ENCODE measurements at regions of chr6 and their contacts with region 1.

Region 1: DNA sequence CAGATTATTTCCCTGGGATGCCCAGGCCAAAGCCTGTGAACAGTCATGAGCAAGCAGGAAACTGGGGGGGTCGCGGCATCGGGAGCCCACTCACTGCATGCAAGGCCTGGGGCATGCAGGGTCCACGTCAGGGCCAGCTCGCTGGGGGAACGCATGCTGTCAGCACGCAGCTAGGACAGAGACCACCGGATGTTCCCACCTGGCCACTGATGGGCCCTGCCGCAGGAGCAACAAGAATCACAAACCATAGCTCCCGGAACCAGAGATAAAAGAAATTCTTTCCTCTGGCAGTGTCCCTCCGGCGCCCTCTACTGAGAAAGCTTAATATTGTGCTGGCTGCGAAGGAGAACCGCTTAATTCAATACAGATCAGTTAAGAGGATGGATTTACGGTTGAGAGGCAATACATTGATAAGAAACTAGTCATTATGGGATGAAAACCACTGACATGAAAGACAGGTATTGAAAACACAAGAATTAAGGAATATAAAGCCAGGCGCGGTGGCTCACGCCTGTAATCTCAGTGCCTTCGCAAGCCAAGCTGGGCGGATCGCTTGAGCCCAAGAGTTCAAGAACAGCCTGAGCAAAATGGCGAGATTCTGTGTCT is 32.6 kb downstream of the C6orf15 start:
- DNase-seq: peak; percentile 73
- H3K4me3 ChIP-seq: peak overlapping the region in 1 of 3 experiments; percentile 40
- H3K27ac ChIP-seq: no peak overlapping the region
- H3K4me1 ChIP-seq: peaks cover 4% of the 10 kb centered on the region
- H3K27me3 ChIP-seq: peaks cover 2 to 3% of the 10 kb centered on the region in 2 experiments
- CTCF ChIP-seq: peak; percentile 68 to 80
- POLR2A ChIP-seq: no peak

Region 2: GRCh38 chr6:30883685-30884520 is 195.9 kb before region 1 on chr6 and contains the start of gene DDR1:
- CTCF ChIA-PET with region 1: interaction called, 13 read pairs
- POLR2A ChIA-PET with region 1: no interaction called
- dilution Hi-C with region 1: no loop called
- intact Hi-C with region 1: no loop called
- DNase-seq: no peak
- H3K4me3 ChIP-seq: peak within 1 kb of the TSS; percentile 22 to 76 (median 47)
- H3K27ac ChIP-seq: no peak within 1 kb of the TSS
- H3K4me1 ChIP-seq: no peaks in the 10 kb centered on the region
- H3K27me3 ChIP-seq: peaks cover 0 to 2% of the 10 kb centered on the region in 2 experiments
- CTCF ChIP-seq: no peak
- POLR2A ChIP-seq: no peak
- total RNA-seq, gene DDR1: 17.7 and 22.9 TPM in 2 replicates

Region 3: GRCh38 chr6:30942338-30943060 is 137.3 kb before region 1 on chr6:
- CTCF ChIA-PET with region 1: interaction called, 19 read pairs
- POLR2A ChIA-PET with region 1: no interaction called
- dilution Hi-C with region 1: no loop called
- intact Hi-C with region 1: no loop called
- DNase-seq: peak; percentile 56
- H3K4me3 ChIP-seq: no peak overlapping the region
- H3K27ac ChIP-seq: no peak overlapping the region
- H3K4me1 ChIP-seq: no peaks in the 10 kb centered on the region
- H3K27me3 ChIP-seq: peaks cover 6 to 16% of the 10 kb centered on the region in 2 experiments
- CTCF ChIP-seq: peak; percentile 55
- POLR2A ChIP-seq: no peak

Region 4: DNA sequence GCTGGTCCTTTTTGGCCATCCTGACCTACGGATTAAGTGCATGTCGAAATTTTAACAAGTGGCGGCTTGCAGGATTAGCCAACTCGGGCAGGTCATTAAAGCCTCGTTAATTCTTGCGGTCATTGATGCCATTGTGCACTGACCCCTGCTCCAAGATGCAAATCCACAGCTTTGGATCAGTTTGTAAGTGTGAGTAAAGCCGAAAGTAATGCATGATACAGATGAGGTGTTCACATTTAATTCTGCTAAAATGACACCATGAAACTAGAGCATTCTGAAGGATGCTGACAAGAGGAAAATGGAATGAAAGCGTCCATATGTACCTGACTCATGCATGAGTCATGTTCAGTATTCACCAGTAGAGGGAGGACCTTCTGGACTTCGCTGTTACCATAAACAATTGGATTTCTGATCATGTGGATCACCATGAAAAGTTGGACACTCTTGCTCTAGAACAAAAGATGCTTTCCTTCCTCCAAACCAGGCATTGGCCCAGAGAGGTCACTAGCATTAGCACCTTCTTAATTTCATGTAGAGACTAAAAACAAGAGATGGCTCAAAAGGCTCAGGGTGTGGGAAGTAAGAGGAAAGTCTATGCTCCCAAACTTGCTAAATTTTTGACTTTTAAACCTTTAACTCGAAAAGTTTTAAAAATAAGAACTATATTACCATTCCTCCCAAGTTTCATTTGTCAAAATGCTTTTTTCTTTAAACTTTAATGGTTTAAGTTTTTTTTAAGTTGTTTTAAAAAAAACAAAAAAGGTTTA is 21.4 kb before region 1 on chr6:
- CTCF ChIA-PET with region 1: interaction called, 22 read pairs
- POLR2A ChIA-PET with region 1: no interaction called
- dilution Hi-C with region 1: no loop called
- intact Hi-C with region 1: no loop called
- DNase-seq: peak; percentile 80
- H3K4me3 ChIP-seq: no peak overlapping the region
- H3K27ac ChIP-seq: no peak overlapping the region
- H3K4me1 ChIP-seq: no peaks in the 10 kb centered on the region
- H3K27me3 ChIP-seq: peaks cover 7 to 10% of the 10 kb centered on the region in 2 experiments
- CTCF ChIP-seq: peak; percentile 36 to 60
- POLR2A ChIP-seq: no peak

Region 5: DNA sequence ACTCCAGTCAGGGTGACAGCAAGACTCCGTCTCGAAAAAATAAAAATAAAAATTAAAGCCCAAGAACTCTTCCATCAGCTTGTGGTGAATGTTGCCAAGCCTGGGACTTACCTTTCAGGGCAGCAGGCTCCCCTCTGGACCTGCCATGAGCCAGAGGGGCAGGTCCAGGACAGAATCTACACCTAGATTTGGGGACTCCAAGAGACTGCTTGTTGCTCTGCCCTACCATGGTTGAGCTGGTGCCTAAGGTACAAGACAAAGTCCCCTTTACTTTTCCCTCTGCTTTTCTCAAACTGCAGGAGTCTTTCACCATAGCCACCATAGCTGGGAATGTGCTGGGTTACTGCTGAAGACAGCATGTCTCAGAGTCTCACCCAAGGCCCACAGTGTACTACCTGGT is 23.4 kb after region 1 on chr6:
- CTCF ChIA-PET with region 1: interaction called, 12 read pairs
- POLR2A ChIA-PET with region 1: no interaction called
- dilution Hi-C with region 1: no loop called
- intact Hi-C with region 1: no loop called
- DNase-seq: no peak
- H3K4me3 ChIP-seq: no peak overlapping the region
- H3K27ac ChIP-seq: no peak overlapping the region
- H3K4me1 ChIP-seq: no peaks in the 10 kb centered on the region
- H3K27me3 ChIP-seq: peaks cover 0 to 3% of the 10 kb centered on the region in 2 experiments
- CTCF ChIP-seq: no peak
- POLR2A ChIP-seq: no peak

Region 6: GRCh38 chr6:31197559-31198305 is 118.0 kb after region 1 on chr6:
- CTCF ChIA-PET with region 1: interaction called, 10 read pairs
- POLR2A ChIA-PET with region 1: no interaction called
- dilution Hi-C with region 1: no loop called
- intact Hi-C with region 1: no loop called
- DNase-seq: peak; percentile 74
- H3K4me3 ChIP-seq: peak overlapping the region; percentile 51 to 88 (median 79)
- H3K27ac ChIP-seq: peak overlapping the region; percentile 93
- H3K4me1 ChIP-seq: peaks cover 4% of the 10 kb centered on the region
- H3K27me3 ChIP-seq: no peaks in the 10 kb centered on the region
- CTCF ChIP-seq: no peak
- POLR2A ChIP-seq: peak; percentile 27

Region 7: DNA sequence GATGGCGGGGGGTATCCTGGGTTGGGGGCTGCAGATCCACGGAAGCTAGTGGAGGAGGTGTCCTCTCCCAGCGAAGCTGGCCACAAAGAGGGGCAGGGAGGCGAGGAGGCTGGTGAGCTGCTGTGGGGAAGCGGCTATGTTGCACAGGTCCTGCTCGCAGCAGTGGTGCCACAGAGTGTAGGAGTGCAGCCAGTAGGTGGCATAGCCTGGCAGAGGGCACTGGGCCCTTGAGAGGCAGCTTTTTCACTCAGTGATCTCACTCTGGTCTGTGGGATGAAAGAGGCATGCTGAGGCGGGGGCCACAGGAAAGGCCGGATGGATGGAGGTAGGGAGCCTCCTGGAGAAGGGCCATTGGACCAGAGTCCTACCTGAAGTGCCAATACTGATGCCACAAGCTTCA is 632.5 kb after region 1 on chr6:
- CTCF ChIA-PET with region 1: no interaction called
- POLR2A ChIA-PET with region 1: no interaction called
- dilution Hi-C with region 1: no loop called
- intact Hi-C with region 1: no loop called
- DNase-seq: no peak
- H3K4me3 ChIP-seq: no peak overlapping the region
- H3K27ac ChIP-seq: no peak overlapping the region
- H3K4me1 ChIP-seq: peaks cover 8% of the 10 kb centered on the region
- H3K27me3 ChIP-seq: no peaks in the 10 kb centered on the region
- CTCF ChIP-seq: peak in 1 of 2 donors; percentile 35
- POLR2A ChIP-seq: no peak

Measured in endothelial cell of umbilical vein (primary cell).